ENCODE measurements at regions of chr3 and their contacts with region 1.

Region 1: GRCh38 chr3:61725851-61726333 is 164.5 kb downstream of the PTPRG start:
- DNase-seq: peak; percentile 39 to 51
- H3K4me3 ChIP-seq: no peak overlapping the region
- H3K4me3 Mint-ChIP-seq: peak overlapping the region; percentile 17
- H3K27ac Mint-ChIP-seq: peak overlapping the region; percentile 37
- H3K4me1 ChIP-seq: peaks cover 50% of the 10 kb centered on the region
- H3K4me1 Mint-ChIP-seq: peaks cover 47% of the 10 kb centered on the region
- H3K27me3 ChIP-seq: no peaks in the 10 kb centered on the region
- H3K27me3 Mint-ChIP-seq: no peaks in the 10 kb centered on the region
- CTCF ChIP-seq: no peak

Region 2: DNA sequence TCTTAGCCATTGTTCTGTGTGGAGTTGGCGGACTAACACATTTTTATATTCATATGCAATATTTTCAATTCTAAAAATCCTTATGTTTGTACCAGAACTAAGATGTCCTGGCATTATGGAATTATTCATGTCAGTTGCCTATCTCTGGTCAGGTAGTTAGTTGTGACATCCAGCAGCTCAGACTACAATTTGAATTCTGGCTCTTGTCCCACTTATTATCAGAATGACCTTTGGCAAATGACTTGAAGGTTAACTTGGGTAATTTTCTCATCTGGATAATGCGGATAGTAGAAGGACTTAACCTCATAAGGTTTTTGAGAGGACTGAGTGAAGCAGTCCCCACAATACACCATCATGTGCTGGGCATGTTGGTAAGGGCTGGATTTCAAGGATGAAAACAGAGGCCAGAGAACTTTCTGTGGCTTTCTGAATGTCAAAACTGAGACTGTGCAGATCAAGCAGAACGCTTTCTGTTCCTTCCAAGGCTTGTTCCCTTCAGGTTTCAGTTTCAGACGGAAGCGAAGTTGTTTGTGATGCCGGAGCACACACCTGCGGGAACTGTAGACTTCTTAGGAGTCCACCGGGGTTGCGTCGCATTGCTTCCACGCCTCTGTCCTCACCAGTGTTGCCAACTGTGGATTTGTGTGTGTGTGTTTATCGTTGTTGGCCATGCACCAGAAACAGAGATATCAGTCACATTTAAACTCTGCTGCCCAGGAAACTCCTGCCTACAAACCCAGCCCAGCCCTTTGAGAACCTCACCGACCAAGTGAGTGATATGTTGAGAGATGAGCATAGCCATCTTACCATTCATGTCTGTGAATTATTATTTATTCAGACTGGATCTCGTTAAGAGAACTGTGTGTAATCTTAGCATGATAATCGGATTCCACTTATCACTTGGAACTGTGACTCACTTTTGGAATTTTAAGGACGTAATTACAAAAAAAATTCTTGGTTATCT is 88.5 kb before region 1 on chr3:
- CTCF ChIA-PET with region 1: no interaction called
- POLR2A ChIA-PET with region 1: no interaction called
- intact Hi-C with region 1: loop called (anchors 5 kb)
- DNase-seq: peak; percentile 28 to 53
- H3K4me3 ChIP-seq: peak overlapping the region; percentile 32
- H3K4me3 Mint-ChIP-seq: peak overlapping the region; percentile 73
- H3K27ac Mint-ChIP-seq: peak overlapping the region; percentile 72
- H3K4me1 ChIP-seq: peaks cover 42% of the 10 kb centered on the region
- H3K4me1 Mint-ChIP-seq: peaks cover 7% of the 10 kb centered on the region
- H3K27me3 ChIP-seq: no peaks in the 10 kb centered on the region
- H3K27me3 Mint-ChIP-seq: no peaks in the 10 kb centered on the region
- CTCF ChIP-seq: no peak

Region 3: DNA sequence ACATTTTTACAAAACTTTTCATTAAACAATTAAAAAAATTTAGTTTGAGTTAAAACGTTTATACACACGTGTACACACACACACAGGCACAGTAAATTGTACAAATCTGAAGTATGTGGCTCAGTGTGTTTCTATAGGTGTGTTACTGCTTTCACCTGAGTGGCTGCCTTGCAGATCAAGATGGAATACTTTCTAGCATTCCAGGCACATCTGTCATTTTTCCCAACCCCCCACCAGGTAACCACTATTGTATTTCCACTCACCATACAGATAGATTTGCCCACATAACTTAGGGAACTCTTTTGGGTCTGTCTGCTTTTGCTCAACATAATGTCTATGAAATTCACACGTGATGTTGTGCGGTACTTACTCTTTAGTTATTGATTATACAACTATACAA is 23.4 kb before region 1 on chr3:
- CTCF ChIA-PET with region 1: no interaction called
- POLR2A ChIA-PET with region 1: interaction called, 4 read pairs
- intact Hi-C with region 1: loop called (anchors 2 kb)
- DNase-seq: peak; percentile 42 to 47
- H3K4me3 ChIP-seq: no peak overlapping the region
- H3K4me3 Mint-ChIP-seq: peak overlapping the region; percentile 33
- H3K27ac Mint-ChIP-seq: peak overlapping the region; percentile 87
- H3K4me1 ChIP-seq: peaks cover 46% of the 10 kb centered on the region
- H3K4me1 Mint-ChIP-seq: peaks cover 38% of the 10 kb centered on the region
- H3K27me3 ChIP-seq: no peaks in the 10 kb centered on the region
- H3K27me3 Mint-ChIP-seq: no peaks in the 10 kb centered on the region
- CTCF ChIP-seq: no peak

Region 4: GRCh38 chr3:61821823-61822251 is 95.9 kb after region 1 on chr3:
- CTCF ChIA-PET with region 1: no interaction called
- POLR2A ChIA-PET with region 1: interaction called, 12 read pairs
- intact Hi-C with region 1: no loop called
- DNase-seq: no peak
- H3K4me3 ChIP-seq: no peak overlapping the region
- H3K4me3 Mint-ChIP-seq: no peak overlapping the region
- H3K27ac Mint-ChIP-seq: no peak overlapping the region
- H3K4me1 ChIP-seq: no peaks in the 10 kb centered on the region
- H3K4me1 Mint-ChIP-seq: peaks cover under 1% of the 10 kb centered on the region
- H3K27me3 ChIP-seq: no peaks in the 10 kb centered on the region
- H3K27me3 Mint-ChIP-seq: no peaks in the 10 kb centered on the region
- CTCF ChIP-seq: no peak

Region 5: DNA sequence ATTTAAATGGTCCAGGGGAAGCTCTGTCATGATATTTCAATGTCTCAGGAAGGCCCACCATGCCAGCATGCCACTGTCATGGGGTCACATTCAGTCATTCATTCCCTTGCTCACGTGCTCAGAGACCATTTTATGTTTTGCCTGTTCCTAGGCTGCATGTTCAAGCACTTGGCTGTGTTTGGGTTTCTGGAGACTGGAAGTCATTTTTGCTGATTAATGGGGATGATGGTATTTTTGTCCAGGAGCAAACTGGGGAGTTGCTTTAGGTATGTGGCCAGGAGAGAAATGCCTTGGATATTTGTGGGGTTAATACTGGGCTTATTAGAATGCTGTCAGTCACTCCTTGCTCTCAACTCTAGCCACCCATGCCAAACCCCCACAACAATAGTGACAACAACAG is 139.0 kb after region 1 on chr3:
- CTCF ChIA-PET with region 1: no interaction called
- POLR2A ChIA-PET with region 1: no interaction called
- intact Hi-C with region 1: no loop called
- DNase-seq: no peak
- H3K4me3 ChIP-seq: no peak overlapping the region
- H3K4me3 Mint-ChIP-seq: no peak overlapping the region
- H3K27ac Mint-ChIP-seq: no peak overlapping the region
- H3K4me1 ChIP-seq: no peaks in the 10 kb centered on the region; the same call in 1 of the 2 replicates
- H3K4me1 Mint-ChIP-seq: peaks cover 7% of the 10 kb centered on the region
- H3K27me3 ChIP-seq: no peaks in the 10 kb centered on the region
- H3K27me3 Mint-ChIP-seq: no peaks in the 10 kb centered on the region
- CTCF ChIP-seq: no peak

Region 6: DNA sequence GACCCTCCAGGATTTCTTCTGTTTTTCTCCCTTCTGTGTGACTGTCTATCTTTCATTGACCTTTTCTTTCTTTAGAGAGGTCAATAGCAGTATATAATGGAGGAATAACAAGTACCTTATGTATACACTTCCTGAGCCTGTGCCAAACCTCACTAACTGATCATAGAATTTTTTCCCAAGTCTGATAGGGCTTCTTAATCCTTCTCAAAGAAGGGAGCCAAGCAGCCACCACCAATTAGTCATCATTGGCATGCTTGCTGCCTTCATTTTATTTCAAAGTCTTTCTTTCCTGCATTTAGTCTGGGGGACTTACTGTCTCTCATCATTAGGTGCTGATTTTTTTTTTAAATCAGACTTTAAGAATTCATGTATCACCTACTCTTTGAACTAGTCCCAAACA is 320.4 kb after region 1 on chr3:
- CTCF ChIA-PET with region 1: no interaction called
- POLR2A ChIA-PET with region 1: no interaction called
- intact Hi-C with region 1: no loop called
- DNase-seq: no peak
- H3K4me3 ChIP-seq: no peak overlapping the region
- H3K4me3 Mint-ChIP-seq: no peak overlapping the region
- H3K27ac Mint-ChIP-seq: no peak overlapping the region
- H3K4me1 ChIP-seq: no peaks in the 10 kb centered on the region
- H3K4me1 Mint-ChIP-seq: no peaks in the 10 kb centered on the region
- H3K27me3 ChIP-seq: no peaks in the 10 kb centered on the region
- H3K27me3 Mint-ChIP-seq: no peaks in the 10 kb centered on the region
- CTCF ChIP-seq: no peak